Aorta (tissue), 5 donors: ENCODE measurements at regions of chr12 and their contacts with region 1.

Region 1: DNA sequence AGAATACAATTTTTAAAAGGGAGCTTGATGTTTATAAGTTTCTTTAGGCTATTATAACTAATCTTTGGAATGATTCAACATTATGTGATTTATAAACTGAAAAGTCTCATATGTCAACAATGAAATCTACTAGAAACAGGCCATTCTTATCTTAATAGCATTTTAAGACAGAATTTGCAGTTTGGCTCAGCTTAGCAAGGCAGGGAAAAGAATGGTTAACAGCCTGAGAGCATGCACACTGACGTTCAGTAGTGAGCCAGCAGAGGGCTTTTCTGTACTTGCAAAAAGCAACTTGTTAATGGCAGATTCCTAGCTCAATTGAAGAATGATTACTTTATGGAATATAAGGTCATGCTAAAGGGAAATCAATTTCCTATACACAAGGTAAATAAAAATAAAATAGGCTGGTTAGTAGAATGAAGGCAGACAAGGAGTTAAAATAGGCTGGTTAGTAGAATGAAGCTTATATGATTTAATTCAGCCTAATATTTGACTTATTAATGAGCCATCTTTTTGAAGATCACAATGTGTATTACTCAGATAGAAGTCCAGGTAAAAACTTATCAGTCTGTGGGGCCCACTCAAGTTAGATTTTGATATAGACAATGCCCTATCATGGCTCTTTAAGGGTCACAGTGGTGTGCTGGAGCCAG is 95.9 kb downstream of the OTOGL start:
- DNase-seq: no peak
- ATAC-seq: no peak
- H3K4me3 ChIP-seq: no peak overlapping the region
- H3K27ac ChIP-seq: no peak overlapping the region
- H3K4me1 ChIP-seq: no peaks in the 10 kb centered on the region
- H3K27me3 ChIP-seq: no peaks in the 10 kb centered on the region

Region 2: DNA sequence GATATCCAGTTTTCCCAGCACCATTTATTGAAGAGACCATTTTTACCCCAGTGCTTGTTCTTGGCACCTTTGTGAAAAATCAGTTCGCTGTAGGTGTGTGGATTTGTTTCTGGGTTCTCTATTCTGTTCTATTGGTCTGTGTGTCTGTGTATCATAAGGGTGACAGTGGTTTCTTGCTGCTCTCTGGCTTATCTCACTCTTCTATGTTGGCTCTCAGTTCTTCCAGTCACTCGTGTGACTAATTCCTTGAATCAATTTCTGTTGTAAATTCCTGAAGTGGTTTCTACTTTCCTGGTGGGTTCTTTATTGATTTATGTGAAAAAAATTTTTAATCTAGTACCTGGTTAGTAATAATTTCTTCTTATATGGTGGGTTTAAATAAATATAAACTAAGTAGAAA is 37.6 kb before region 1 on chr12:
- intact Hi-C with region 1: no loop called
- DNase-seq: no peak
- ATAC-seq: no peak
- H3K4me3 ChIP-seq: no peak overlapping the region
- H3K27ac ChIP-seq: no peak overlapping the region
- H3K4me1 ChIP-seq: no peaks in the 10 kb centered on the region
- H3K27me3 ChIP-seq: no peaks in the 10 kb centered on the region

Region 3: GRCh38 chr12:80400571-80400991 is 205.4 kb after region 1 on chr12:
- intact Hi-C with region 1: loop called in 1 of 2 experiments (anchors 10 kb)
- DNase-seq: peak; percentile 43 to 78
- ATAC-seq: peak; percentile 70
- H3K4me3 ChIP-seq: peak overlapping the region; percentile 23 to 60
- H3K27ac ChIP-seq: no peak overlapping the region
- H3K4me1 ChIP-seq: peaks cover 0 to 2% of the 10 kb centered on the region in 2 donors
- H3K27me3 ChIP-seq: no peaks in the 10 kb centered on the region